ENCODE measurements at regions of chr4 and their contacts with region 1.

Region 1: GRCh38 chr4:44632089-44632488 is 19.3 kb downstream of the YIPF7 start:
- DNase-seq: no peak

Region 2: GRCh38 chr4:43943998-43944397 is 688.1 kb before region 1 on chr4:
- intact Hi-C with region 1: loop called in 1 of 2 experiments (anchors 5 kb)
- DNase-seq: no peak

Region 3: GRCh38 chr4:44662623-44663005 is 30.5 kb after region 1 on chr4:
- intact Hi-C with region 1: no loop called
- DNase-seq: no peak